CD4-positive, alpha-beta memory T cell (primary cell): ENCODE measurements at regions of chr7 and their contacts with region 1.

Region 1: GRCh38 chr7:151017953-151018420 is 6.3 kb downstream of the ATG9B start:
- DNase-seq: peak; percentile 72 to 81 (median 73)
- H3K4me3 ChIP-seq: peak overlapping the region; percentile 28 to 68
- H3K4me3 Mint-ChIP-seq: peak overlapping the region; percentile 81 to 94 (median 85)
- H3K27ac ChIP-seq: no peak overlapping the region
- H3K27ac Mint-ChIP-seq: peak overlapping the region; percentile 77 to 97 (median 93)
- H3K4me1 ChIP-seq: peaks cover 60% of the 10 kb centered on the region
- H3K4me1 Mint-ChIP-seq: peaks cover 38 to 65% (median 51%) of the 10 kb centered on the region in 4 donors
- H3K27me3 ChIP-seq: no peaks in the 10 kb centered on the region
- H3K27me3 Mint-ChIP-seq: peaks cover 1 to 9% of the 10 kb centered on the region in 2 donors

Region 2: GRCh38 chr7:150903606-150904005 is 114.4 kb before region 1 on chr7:
- CTCF ChIA-PET with region 1: interaction called, 23 read pairs
- POLR2A ChIA-PET with region 1: interaction called, 3 read pairs
- intact Hi-C with region 1: loop called (anchors 1 kb)
- DNase-seq: no peak
- H3K4me3 ChIP-seq: no peak overlapping the region
- H3K4me3 Mint-ChIP-seq: no peak overlapping the region
- H3K27ac ChIP-seq: no peak overlapping the region
- H3K27ac Mint-ChIP-seq: no peak overlapping the region
- H3K4me1 ChIP-seq: peaks cover 3% of the 10 kb centered on the region
- H3K4me1 Mint-ChIP-seq: peaks cover 0 to 3% (median under 1%) of the 10 kb centered on the region in 4 donors
- H3K27me3 ChIP-seq: no peaks in the 10 kb centered on the region
- H3K27me3 Mint-ChIP-seq: peaks cover 21 to 27% of the 10 kb centered on the region in 2 donors

Region 3: GRCh38 chr7:150974468-150975391 is 43.3 kb before region 1 on chr7:
- CTCF ChIA-PET with region 1: interaction called, 10 read pairs
- POLR2A ChIA-PET with region 1: interaction called, 30 read pairs
- intact Hi-C with region 1: no loop called
- DNase-seq: peak; percentile 79 to 87 (median 83)
- H3K4me3 ChIP-seq: peak overlapping the region; percentile 36 to 51
- H3K4me3 Mint-ChIP-seq: peak overlapping the region; percentile 83 to 94 (median 88)
- H3K27ac ChIP-seq: peak overlapping the region; percentile 63
- H3K27ac Mint-ChIP-seq: peak overlapping the region; percentile 87 to 97 (median 95)
- H3K4me1 ChIP-seq: peaks cover 46% of the 10 kb centered on the region
- H3K4me1 Mint-ChIP-seq: peaks cover 18 to 54% (median 44%) of the 10 kb centered on the region in 4 donors
- H3K27me3 ChIP-seq: peaks cover 15% of the 10 kb centered on the region
- H3K27me3 Mint-ChIP-seq: peaks cover 6 to 17% of the 10 kb centered on the region in 2 donors

Region 4: DNA sequence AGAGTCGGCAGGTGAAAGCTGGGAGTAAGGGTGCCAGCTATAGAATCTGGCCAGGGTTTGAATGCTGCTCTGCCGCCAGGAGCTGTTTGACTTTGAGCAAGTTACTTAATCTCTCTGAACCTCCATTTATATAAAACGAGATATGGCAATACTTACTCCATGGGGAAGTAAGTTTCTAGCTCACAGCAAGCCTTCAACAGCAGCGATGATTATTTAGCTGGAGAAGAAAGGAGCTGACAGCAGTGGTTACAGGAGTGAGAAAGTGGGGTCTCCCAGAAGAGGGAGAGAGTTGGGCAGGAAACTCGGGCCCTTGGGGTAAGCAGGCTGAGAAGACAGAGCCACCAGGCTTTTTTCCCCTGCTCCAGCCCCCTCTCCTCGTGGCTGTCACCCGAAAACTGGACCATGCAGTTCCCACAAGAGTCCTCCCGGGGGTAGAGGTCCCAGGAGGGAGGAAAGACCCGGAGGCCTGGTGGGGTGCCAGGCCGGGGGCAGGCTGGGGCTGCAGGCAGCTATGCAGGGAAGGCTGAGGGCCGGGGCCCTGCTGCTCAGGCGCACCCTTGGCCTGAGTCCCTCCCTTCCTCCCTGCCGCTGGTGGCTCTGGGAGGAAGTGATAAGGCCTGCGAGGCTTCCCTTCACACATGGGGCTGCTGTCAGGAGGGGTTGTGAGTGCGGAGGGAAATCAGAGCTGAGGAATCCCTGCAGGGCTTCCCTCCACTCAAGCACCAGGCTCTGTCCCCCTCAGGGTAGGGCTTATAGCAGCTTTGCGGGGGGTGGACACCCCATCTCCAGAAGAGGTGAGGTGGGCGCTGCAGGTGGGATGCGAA is 23.6 kb before region 1 on chr7:
- CTCF ChIA-PET with region 1: interaction called, 98 read pairs
- POLR2A ChIA-PET with region 1: interaction called, 12 read pairs
- intact Hi-C with region 1: no loop called
- DNase-seq: peak in 1 of 5 donors; percentile 32
- H3K4me3 ChIP-seq: peak overlapping the region in 1 of 2 donors; percentile 36
- H3K4me3 Mint-ChIP-seq: peak overlapping the region; percentile 26 to 61 (median 46)
- H3K27ac ChIP-seq: peak overlapping the region; percentile 7
- H3K27ac Mint-ChIP-seq: peak overlapping the region in 6 of 7 donors; percentile 29 to 85 (median 69)
- H3K4me1 ChIP-seq: peaks cover 43% of the 10 kb centered on the region
- H3K4me1 Mint-ChIP-seq: peaks cover 17 to 52% (median 38%) of the 10 kb centered on the region in 4 donors
- H3K27me3 ChIP-seq: no peaks in the 10 kb centered on the region
- H3K27me3 Mint-ChIP-seq: no peaks in the 10 kb centered on the region

Region 5: GRCh38 chr7:151057989-151058780 is 40.2 kb after region 1 on chr7:
- CTCF ChIA-PET with region 1: interaction called, 3 read pairs
- POLR2A ChIA-PET with region 1: interaction called, 13 read pairs
- intact Hi-C with region 1: loop called (anchors 2 kb)
- DNase-seq: peak; percentile 95 to 99 (median 98)
- H3K4me3 ChIP-seq: peak overlapping the region; percentile 45 to 70
- H3K4me3 Mint-ChIP-seq: peak overlapping the region; percentile 86 to 97 (median 94)
- H3K27ac ChIP-seq: peak overlapping the region; percentile 85
- H3K27ac Mint-ChIP-seq: peak overlapping the region; percentile 85 to 99 (median 96)
- H3K4me1 ChIP-seq: peaks cover 45% of the 10 kb centered on the region
- H3K4me1 Mint-ChIP-seq: peaks cover 18 to 54% (median 37%) of the 10 kb centered on the region in 4 donors
- H3K27me3 ChIP-seq: no peaks in the 10 kb centered on the region
- H3K27me3 Mint-ChIP-seq: peaks cover 0 to 2% of the 10 kb centered on the region in 2 donors

Region 6: GRCh38 chr7:151110941-151111645 is 93.1 kb after region 1 on chr7:
- CTCF ChIA-PET with region 1: interaction called, 38 read pairs
- POLR2A ChIA-PET with region 1: interaction called, 5 read pairs
- intact Hi-C with region 1: loop called (anchors 1 kb)
- DNase-seq: peak; percentile 69 to 76 (median 72)
- H3K4me3 ChIP-seq: no peak overlapping the region
- H3K4me3 Mint-ChIP-seq: peak overlapping the region in 1 of 8 donors; percentile 30
- H3K27ac ChIP-seq: no peak overlapping the region
- H3K27ac Mint-ChIP-seq: peak overlapping the region in 1 of 7 donors; percentile 57
- H3K4me1 ChIP-seq: peaks cover 10% of the 10 kb centered on the region
- H3K4me1 Mint-ChIP-seq: peaks cover 1 to 20% (median 10%) of the 10 kb centered on the region in 4 donors
- H3K27me3 ChIP-seq: no peaks in the 10 kb centered on the region
- H3K27me3 Mint-ChIP-seq: no peaks in the 10 kb centered on the region